ENCODE measurements at regions of chr17 and their contacts with region 1.

Region 1: GRCh38 chr17:50478391-50479381 is at the start of gene RSAD1:
- DNase-seq: peak; percentile 91
- H3K4me3 Mint-ChIP-seq: peak within 1 kb of the TSS; percentile 84
- H3K27ac Mint-ChIP-seq: peak within 1 kb of the TSS; percentile 87
- H3K4me1 Mint-ChIP-seq: peaks cover 21% of the 10 kb centered on the region
- H3K27me3 Mint-ChIP-seq: peaks cover 12% of the 10 kb centered on the region

Region 2: GRCh38 chr17:50414808-50415207 is 63.9 kb before region 1 on chr17:
- CTCF ChIA-PET with region 1: no interaction called
- DNase-seq: no peak
- H3K4me3 Mint-ChIP-seq: no peak overlapping the region
- H3K27ac Mint-ChIP-seq: no peak overlapping the region
- H3K4me1 Mint-ChIP-seq: peaks cover 2% of the 10 kb centered on the region
- H3K27me3 Mint-ChIP-seq: peaks cover 38% of the 10 kb centered on the region

Region 3: DNA sequence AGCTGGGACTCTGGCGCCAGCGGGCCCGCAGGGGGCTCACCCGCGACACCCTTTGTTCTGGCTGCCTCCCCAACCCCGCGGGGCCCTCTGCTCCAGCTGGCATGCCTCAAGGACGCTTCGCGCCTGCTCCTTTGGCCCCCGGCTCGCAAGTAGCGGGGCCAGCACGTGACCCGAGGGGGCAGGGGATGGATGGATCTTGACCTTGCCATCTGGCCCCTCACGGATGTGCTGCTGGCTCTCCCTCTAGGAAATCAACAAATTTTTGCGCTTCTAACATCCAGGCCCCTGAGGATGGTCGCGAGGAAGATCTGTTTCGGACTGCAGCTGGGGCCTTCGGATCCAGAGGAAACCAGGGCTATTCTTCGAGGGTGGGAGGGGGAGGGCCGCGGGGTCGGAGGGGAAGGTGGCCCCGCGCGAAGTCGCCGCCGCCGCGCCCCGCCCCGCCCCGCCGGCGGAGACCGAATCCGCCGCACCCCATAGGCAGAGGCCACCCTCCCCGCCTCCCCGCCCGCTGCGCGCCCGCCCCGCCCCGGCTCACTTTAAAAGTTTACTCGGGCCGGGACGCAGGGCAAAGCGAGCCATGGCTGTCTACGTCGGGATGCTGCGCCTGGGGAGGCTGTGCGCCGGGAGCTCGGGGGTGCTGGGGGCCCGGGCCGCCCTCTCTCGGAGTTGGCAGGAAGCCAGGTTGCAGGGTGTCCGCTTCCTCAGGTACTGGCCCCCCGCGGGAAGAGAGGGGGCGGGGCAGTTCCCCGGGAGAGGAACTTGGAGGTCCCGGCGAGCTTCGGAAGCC is 52.8 kb before region 1 on chr17 and contains the start of gene ACSF2:
- CTCF ChIA-PET with region 1: interaction called, 15 read pairs
- DNase-seq: peak; percentile 85
- H3K4me3 Mint-ChIP-seq: peak within 1 kb of the TSS; percentile 78
- H3K27ac Mint-ChIP-seq: peak within 1 kb of the TSS; percentile 82
- H3K4me1 Mint-ChIP-seq: peaks cover 38% of the 10 kb centered on the region
- H3K27me3 Mint-ChIP-seq: no peaks in the 10 kb centered on the region

Region 4: GRCh38 chr17:50501054-50501453 is 22.4 kb after region 1 on chr17:
- CTCF ChIA-PET with region 1: interaction called, 44 read pairs
- DNase-seq: peak; percentile 54
- H3K4me3 Mint-ChIP-seq: no peak overlapping the region
- H3K27ac Mint-ChIP-seq: no peak overlapping the region
- H3K4me1 Mint-ChIP-seq: peaks cover 40% of the 10 kb centered on the region
- H3K27me3 Mint-ChIP-seq: peaks cover 39% of the 10 kb centered on the region

Region 5: GRCh38 chr17:50507871-50508572 is 29.3 kb after region 1 on chr17 and contains the start of gene MYCBPAP:
- CTCF ChIA-PET with region 1: interaction called, 44 read pairs
- DNase-seq: peak; percentile 91
- H3K4me3 Mint-ChIP-seq: peak within 1 kb of the TSS; percentile 96
- H3K27ac Mint-ChIP-seq: peak within 1 kb of the TSS; percentile 93
- H3K4me1 Mint-ChIP-seq: peaks cover 74% of the 10 kb centered on the region
- H3K27me3 Mint-ChIP-seq: peaks cover 10% of the 10 kb centered on the region

Region 6: GRCh38 chr17:50541716-50542688 is 63.3 kb after region 1 on chr17:
- CTCF ChIA-PET with region 1: interaction called, 21 read pairs
- DNase-seq: peak; percentile 88
- H3K4me3 Mint-ChIP-seq: peak overlapping the region; percentile 77
- H3K27ac Mint-ChIP-seq: peak overlapping the region; percentile 62
- H3K4me1 Mint-ChIP-seq: peaks cover 25% of the 10 kb centered on the region
- H3K27me3 Mint-ChIP-seq: peaks cover 48% of the 10 kb centered on the region